HCT116 (cell line): ENCODE measurements at regions of chr15 and their contacts with region 1.

Region 1: DNA sequence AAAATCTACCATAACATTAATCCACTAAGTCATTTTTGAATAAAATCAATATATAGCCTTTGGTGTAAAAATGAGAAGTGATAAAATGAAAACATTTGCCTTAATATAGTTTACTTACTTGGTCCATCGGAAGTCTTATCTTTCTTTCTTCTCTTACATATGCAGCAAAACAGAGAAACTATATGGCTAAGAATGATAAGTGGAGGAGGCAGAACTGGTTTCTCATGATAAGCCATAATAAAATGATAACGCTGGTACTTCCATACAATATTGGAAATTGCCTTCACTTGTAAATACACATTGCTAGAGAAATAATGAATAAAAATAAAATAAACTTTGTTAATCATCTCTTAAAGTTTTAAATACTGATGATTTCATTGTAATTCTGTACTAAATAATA is 47.8 kb upstream of the USP50 start:
- DNase-seq: no peak
- ATAC-seq: no peak
- H3K4me3 ChIP-seq: no peak overlapping the region
- H3K27ac ChIP-seq: no peak overlapping the region
- H3K4me1 ChIP-seq: no peaks in the 10 kb centered on the region
- H3K27me3 ChIP-seq: no peaks in the 10 kb centered on the region
- CTCF ChIP-seq: no peak
- POLR2A ChIP-seq: no peak
- RAD21 ChIP-seq: no peak

Region 2: GRCh38 chr15:50613600-50613999 is 19.3 kb after region 1 on chr15:
- CTCF ChIA-PET with region 1: no interaction called
- POLR2A ChIA-PET with region 1: no interaction called
- RAD21 ChIA-PET with region 1: no interaction called
- intact Hi-C with region 1: loop called (anchors 1 kb)
- DNase-seq: no peak
- ATAC-seq: no peak
- H3K4me3 ChIP-seq: no peak overlapping the region
- H3K27ac ChIP-seq: no peak overlapping the region
- H3K4me1 ChIP-seq: no peaks in the 10 kb centered on the region
- H3K27me3 ChIP-seq: no peaks in the 10 kb centered on the region
- CTCF ChIP-seq: no peak
- POLR2A ChIP-seq: no peak
- RAD21 ChIP-seq: no peak